Endothelial cell of umbilical vein (primary cell): ENCODE measurements at regions of chr10 and their contacts with region 1.

Region 1: GRCh38 chr10:103966671-103967447 is at the start of gene SLK:
- DNase-seq: peak; percentile 86
- H3K4me3 ChIP-seq: peak within 1 kb of the TSS; percentile 81 to 99 (median 97)
- H3K27ac ChIP-seq: peak within 1 kb of the TSS; percentile 73
- H3K4me1 ChIP-seq: peaks cover 26% of the 10 kb centered on the region
- H3K27me3 ChIP-seq: no peaks in the 10 kb centered on the region
- CTCF ChIP-seq: no peak
- POLR2A ChIP-seq: peak; percentile 83
- total RNA-seq, gene SLK: 31.8 and 36.0 TPM in 2 replicates

Region 2: GRCh38 chr10:103895411-103896186 is 71.3 kb before region 1 on chr10:
- CTCF ChIA-PET with region 1: interaction called, 5 read pairs
- POLR2A ChIA-PET with region 1: interaction called, 3 read pairs
- dilution Hi-C with region 1: no loop called
- intact Hi-C with region 1: loop called (anchors 2 kb)
- DNase-seq: peak; percentile 72
- H3K4me3 ChIP-seq: no peak overlapping the region
- H3K27ac ChIP-seq: peak overlapping the region; percentile 85
- H3K4me1 ChIP-seq: peaks cover 33% of the 10 kb centered on the region
- H3K27me3 ChIP-seq: no peaks in the 10 kb centered on the region
- CTCF ChIP-seq: no peak
- POLR2A ChIP-seq: no peak

Region 3: DNA sequence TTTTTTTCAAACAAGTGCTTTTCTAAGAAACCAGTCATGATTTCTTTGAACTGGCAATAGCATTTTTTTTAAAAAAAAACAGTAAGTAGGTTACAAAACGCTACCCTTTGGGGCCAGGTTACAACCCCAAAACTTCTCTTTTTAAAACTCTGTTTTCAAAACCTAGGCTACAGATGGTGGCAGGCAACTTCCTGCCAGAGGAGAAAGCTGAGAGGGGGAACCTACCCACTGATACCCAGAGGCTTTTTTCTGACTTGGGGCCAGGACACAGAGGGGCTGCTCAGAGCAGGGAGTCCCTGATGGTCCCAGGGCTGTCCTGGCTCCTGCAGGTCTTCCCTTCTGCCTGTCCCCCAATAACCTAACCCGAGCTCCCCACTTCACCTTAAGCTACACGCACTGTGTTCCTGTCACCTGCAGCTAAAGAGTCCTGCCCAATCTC is 55.8 kb before region 1 on chr10:
- CTCF ChIA-PET with region 1: interaction called, 3 read pairs
- POLR2A ChIA-PET with region 1: no interaction called
- dilution Hi-C with region 1: no loop called
- intact Hi-C with region 1: loop called (anchors 2 kb)
- DNase-seq: no peak
- H3K4me3 ChIP-seq: no peak overlapping the region
- H3K27ac ChIP-seq: no peak overlapping the region
- H3K4me1 ChIP-seq: peaks cover 28% of the 10 kb centered on the region
- H3K27me3 ChIP-seq: no peaks in the 10 kb centered on the region
- CTCF ChIP-seq: no peak
- POLR2A ChIP-seq: no peak

Region 4: GRCh38 chr10:103918053-103918846 is 48.6 kb before region 1 on chr10 and contains the start of gene STN1:
- CTCF ChIA-PET with region 1: no interaction called
- POLR2A ChIA-PET with region 1: no interaction called
- dilution Hi-C with region 1: no loop called
- intact Hi-C with region 1: loop called (anchors 1 kb)
- DNase-seq: peak; percentile 96
- H3K4me3 ChIP-seq: peak within 1 kb of the TSS; percentile 15 to 63 (median 39)
- H3K27ac ChIP-seq: peak within 1 kb of the TSS; percentile 76
- H3K4me1 ChIP-seq: peaks cover 36% of the 10 kb centered on the region
- H3K27me3 ChIP-seq: no peaks in the 10 kb centered on the region
- CTCF ChIP-seq: no peak
- POLR2A ChIP-seq: peak; percentile 81
- total RNA-seq, gene STN1: 12.7 and 15.3 TPM in 2 replicates

Region 5: DNA sequence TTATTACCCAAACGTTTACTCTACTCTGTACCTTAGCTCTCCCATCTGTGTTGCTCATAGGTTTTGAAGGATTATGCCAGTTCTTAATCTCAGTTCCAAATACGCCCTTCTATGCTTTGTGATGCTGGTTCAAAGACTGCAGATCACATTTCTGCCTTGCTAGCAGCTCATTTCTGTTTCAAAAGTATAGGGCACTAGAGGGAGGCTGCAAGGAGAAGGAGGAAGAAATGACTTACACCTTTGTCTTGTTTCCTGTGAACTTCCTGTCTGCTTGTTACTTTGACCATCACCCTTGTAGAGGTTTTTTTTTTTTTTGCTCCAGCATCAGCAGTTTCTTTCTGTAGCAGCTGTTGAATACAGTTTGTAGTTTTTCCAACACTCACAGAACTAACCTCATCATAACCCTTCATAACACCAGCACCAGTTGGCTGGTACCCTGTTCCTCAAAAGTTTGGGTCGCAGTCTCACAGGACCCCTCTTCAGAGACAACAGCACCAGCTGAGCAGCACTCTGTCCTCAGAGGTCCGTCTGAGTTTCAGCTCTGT is 16.6 kb after region 1 on chr10:
- CTCF ChIA-PET with region 1: interaction called, 8 read pairs
- POLR2A ChIA-PET with region 1: interaction called, 3 read pairs
- dilution Hi-C with region 1: no loop called
- intact Hi-C with region 1: loop called (anchors 2 kb)
- DNase-seq: peak; percentile 57
- H3K4me3 ChIP-seq: peak overlapping the region in 1 of 3 experiments; percentile 27
- H3K27ac ChIP-seq: peak overlapping the region; percentile 83
- H3K4me1 ChIP-seq: peaks cover 65% of the 10 kb centered on the region
- H3K27me3 ChIP-seq: no peaks in the 10 kb centered on the region
- CTCF ChIP-seq: no peak
- POLR2A ChIP-seq: no peak

Region 6: GRCh38 chr10:104022026-104022425 is 55.2 kb after region 1 on chr10:
- CTCF ChIA-PET with region 1: interaction called, 4 read pairs
- POLR2A ChIA-PET with region 1: no interaction called
- dilution Hi-C with region 1: no loop called
- intact Hi-C with region 1: loop called (anchors 1 kb)
- DNase-seq: peak; percentile 46
- H3K4me3 ChIP-seq: peak overlapping the region in 1 of 3 experiments; percentile 1
- H3K27ac ChIP-seq: peak overlapping the region; percentile 65
- H3K4me1 ChIP-seq: peaks cover 41% of the 10 kb centered on the region
- H3K27me3 ChIP-seq: no peaks in the 10 kb centered on the region
- CTCF ChIP-seq: no peak
- POLR2A ChIP-seq: peak; percentile 46

Region 7: GRCh38 chr10:104080762-104081161 is 113.9 kb after region 1 on chr10:
- CTCF ChIA-PET with region 1: no interaction called
- POLR2A ChIA-PET with region 1: no interaction called
- dilution Hi-C with region 1: no loop called
- intact Hi-C with region 1: loop called (anchors 1 kb)
- DNase-seq: peak; percentile 45
- H3K4me3 ChIP-seq: no peak overlapping the region
- H3K27ac ChIP-seq: no peak overlapping the region
- H3K4me1 ChIP-seq: peaks cover 18% of the 10 kb centered on the region
- H3K27me3 ChIP-seq: no peaks in the 10 kb centered on the region
- CTCF ChIP-seq: peak; percentile 46 to 49
- POLR2A ChIP-seq: no peak